HEK293T (cell line): ENCODE measurements at regions of chr17 and their contacts with region 1.

Region 1: GRCh38 chr17:50151041-50151936 is 812 bp upstream of the PPP1R9B start:
- DNase-seq: peak; percentile 93

Region 2: GRCh38 chr17:50107790-50108414 is 43.4 kb before region 1 on chr17:
- CTCF ChIA-PET with region 1: no interaction called
- POLR2A ChIA-PET with region 1: interaction called, 10 read pairs
- DNase-seq: no peak

Region 3: DNA sequence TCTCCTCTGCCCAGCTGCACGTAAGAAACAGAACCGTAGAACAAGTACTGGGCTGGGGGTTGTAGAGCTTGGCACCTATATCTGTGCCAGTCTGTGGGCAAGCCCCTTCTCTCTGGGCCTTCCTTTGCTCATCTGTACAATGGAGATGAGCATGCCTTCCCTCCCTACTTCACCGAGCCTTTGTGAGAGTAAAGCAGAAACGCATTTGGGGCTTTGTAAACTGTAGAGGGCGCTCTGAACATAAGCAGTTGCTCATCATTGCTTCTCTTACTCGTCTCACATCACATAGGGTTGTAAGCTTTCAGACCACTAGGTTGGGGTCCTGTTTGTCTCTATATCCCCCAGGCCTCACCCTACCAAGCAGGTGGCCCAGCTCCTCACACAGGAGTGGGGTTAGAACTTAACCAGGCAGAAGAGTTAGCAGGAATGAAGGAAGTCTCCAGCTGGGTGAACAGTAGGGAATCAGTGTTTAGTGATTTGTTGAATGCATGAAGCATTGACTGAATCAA is 36.4 kb before region 1 on chr17:
- CTCF ChIA-PET with region 1: interaction called, 13 read pairs
- POLR2A ChIA-PET with region 1: interaction called, 10 read pairs
- DNase-seq: peak; percentile 70

Region 4: GRCh38 chr17:50123649-50124349 is 27.5 kb before region 1 on chr17:
- CTCF ChIA-PET with region 1: interaction called, 3 read pairs
- POLR2A ChIA-PET with region 1: interaction called, 12 read pairs
- DNase-seq: peak; percentile 69

Region 5: DNA sequence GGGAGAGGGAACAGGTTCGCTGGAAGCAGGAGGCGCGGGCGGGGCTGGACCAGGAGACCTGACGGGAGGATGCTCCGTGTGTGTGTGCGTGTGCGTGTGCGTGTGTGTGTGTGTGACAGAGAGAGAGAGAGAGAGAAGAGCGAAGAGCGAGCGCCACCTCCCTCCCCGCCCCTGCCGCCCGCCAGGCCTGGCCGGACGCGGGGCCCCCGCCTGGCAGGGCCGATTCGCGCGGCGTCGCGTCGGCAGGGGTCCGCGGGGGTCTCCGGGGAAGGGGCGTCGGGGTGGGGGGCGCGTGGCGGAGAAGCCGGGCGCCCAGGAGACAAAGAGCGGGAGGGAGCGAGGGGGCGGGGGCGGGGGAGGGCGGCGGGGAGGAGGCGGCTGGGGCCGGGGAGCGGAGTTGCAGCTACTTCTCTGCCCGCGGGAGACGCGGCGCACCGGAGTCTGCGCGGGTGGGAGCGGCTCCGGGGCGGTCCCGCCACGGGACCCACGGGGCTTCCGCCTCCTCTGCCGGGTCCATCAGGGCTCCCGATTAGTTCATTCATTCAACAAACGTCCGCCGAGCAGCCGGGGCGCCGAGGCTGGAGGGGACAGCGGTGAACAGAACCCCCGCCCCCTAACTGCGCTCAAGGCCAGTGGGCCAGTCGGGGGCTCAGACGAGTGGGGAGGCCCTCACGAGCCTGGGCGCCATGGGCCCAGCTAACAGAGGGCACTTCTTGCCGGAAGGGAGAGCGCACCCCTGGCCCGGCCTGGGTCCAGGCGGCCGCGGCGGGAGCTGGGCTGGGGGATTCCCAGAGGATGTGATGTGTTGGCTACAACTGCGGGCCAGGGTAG is 21.3 kb before region 1 on chr17 and contains the start of gene SAMD14:
- CTCF ChIA-PET with region 1: interaction called, 3 read pairs
- POLR2A ChIA-PET with region 1: interaction called, 10 read pairs
- DNase-seq: peak; percentile 61

Region 6: GRCh38 chr17:50169121-50169764 is 18.0 kb after region 1 on chr17:
- CTCF ChIA-PET with region 1: interaction called, 10 read pairs
- POLR2A ChIA-PET with region 1: interaction called, 13 read pairs
- DNase-seq: peak; percentile 75

Region 7: DNA sequence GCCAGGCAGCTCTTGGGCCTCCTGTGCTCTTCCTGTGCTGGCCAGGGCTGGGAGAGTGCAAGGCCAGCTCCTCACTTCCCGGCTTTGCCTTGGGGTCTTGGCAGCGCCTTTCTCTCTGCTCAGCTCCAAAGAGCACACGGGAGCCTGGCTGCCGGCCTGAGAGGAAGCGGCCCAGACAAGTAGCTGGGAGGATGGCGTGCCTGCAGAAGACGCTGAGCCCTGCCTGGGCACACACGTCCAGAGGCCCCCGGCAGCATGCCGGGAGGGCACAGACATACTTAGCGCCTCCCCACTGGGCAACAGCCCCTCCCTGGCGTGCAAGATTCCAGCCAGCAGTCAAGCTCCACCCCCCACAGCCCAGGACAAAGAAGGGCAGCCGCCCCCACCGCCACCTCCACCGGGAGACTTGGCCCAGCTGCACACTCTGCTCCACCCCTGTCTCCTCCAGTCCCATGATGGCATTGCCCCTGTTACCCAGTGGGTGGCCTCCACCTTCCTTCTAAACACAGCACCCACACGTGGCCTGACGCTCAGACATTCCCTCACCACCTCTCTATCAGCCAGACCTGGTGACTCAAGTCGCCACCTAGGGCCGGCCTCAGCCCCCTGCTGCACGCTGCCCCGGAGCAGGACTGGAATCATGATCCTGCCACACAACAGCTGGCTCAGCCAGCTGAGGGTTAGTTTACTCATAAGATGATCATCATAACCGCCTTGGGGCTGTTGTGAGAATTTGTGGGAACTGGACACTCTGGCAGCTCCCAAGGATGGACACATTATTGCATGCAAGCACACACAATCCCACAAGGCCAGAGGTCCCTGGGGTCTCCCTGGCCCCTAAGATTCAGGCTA is 26.9 kb after region 1 on chr17:
- CTCF ChIA-PET with region 1: interaction called, 6 read pairs
- POLR2A ChIA-PET with region 1: interaction called, 11 read pairs
- DNase-seq: peak; percentile 80